GM23248 (cell line): ENCODE measurements at regions of chr9 and their contacts with region 1.

Region 1: DNA sequence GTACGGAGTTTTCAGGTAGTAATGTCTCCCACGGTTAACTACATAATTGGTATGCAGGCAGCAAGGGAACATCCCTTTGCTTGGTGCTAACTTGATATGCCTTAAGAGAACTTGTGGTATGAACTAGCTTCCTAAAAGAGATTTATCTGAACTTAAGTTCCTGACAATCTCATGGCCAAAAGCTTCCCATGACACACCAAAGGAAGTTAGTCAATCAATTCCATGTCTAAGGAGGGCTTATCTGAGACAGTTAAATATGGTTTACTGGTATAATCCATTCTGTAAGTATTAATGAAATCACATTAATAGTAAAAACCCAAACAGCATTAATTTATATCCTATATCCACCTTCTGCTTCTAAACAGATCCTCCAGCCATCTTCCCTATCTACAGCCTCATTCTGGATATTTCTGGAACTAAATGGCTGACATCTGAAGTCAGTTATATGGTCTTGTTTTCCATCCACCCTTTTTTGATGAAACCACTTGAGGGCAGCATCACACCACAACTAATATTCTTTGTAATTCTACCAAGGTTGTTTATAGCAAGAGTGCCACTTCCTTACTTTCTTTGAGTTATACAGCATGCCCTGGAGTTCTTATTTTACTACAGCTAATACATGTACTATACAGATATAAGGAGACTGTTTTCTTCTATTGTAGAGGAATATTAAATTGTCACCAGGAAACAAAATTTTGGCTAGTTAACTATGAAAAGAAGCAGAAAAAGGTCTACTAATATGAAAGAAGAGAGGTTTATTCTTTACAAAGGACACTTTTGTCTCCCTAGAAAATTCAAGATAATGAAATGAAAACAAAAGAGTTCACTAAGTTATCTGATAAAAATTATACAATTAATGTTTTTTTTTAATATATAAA is 34.7 kb downstream of the SHOC1 start:
- DNase-seq: peak; percentile 83
- H3K4me3 ChIP-seq: peak overlapping the region; percentile 10; the same call in 1 of the 2 replicates
- H3K27ac ChIP-seq: peak overlapping the region; percentile 49
- H3K4me1 ChIP-seq: peaks cover 34% of the 10 kb centered on the region
- H3K27me3 ChIP-seq: no peaks in the 10 kb centered on the region

Region 2: GRCh38 chr9:110241260-110241857 is 1518.6 kb before region 1 on chr9:
- in situ Hi-C with region 1: no loop called
- DNase-seq: peak; percentile 37
- H3K4me3 ChIP-seq: no peak overlapping the region
- H3K27ac ChIP-seq: no peak overlapping the region
- H3K4me1 ChIP-seq: peaks cover 4% of the 10 kb centered on the region; the same call in 1 of the 2 replicates
- H3K27me3 ChIP-seq: no peaks in the 10 kb centered on the region

Region 3: GRCh38 chr9:112074250-112075008 is 314.4 kb after region 1 on chr9:
- in situ Hi-C with region 1: loop called (anchors 5 kb)
- DNase-seq: peak; percentile 90
- H3K4me3 ChIP-seq: no peak overlapping the region
- H3K27ac ChIP-seq: peak overlapping the region; percentile 97
- H3K4me1 ChIP-seq: peaks cover 31% of the 10 kb centered on the region
- H3K27me3 ChIP-seq: no peaks in the 10 kb centered on the region